Gastrocnemius medialis (tissue), 4 donors: ENCODE measurements at regions of chr3 and their contacts with region 1.

Region 1: GRCh38 chr3:49582177-49582576 is 27.9 kb downstream of the BSN start:
- DNase-seq: no peak
- ATAC-seq: no peak
- H3K4me3 ChIP-seq: no peak overlapping the region
- H3K27ac ChIP-seq: no peak overlapping the region
- H3K4me1 ChIP-seq: no peaks in the 10 kb centered on the region
- H3K27me3 ChIP-seq: no peaks in the 10 kb centered on the region
- CTCF ChIP-seq: no peak
- POLR2A ChIP-seq: no peak

Region 2: DNA sequence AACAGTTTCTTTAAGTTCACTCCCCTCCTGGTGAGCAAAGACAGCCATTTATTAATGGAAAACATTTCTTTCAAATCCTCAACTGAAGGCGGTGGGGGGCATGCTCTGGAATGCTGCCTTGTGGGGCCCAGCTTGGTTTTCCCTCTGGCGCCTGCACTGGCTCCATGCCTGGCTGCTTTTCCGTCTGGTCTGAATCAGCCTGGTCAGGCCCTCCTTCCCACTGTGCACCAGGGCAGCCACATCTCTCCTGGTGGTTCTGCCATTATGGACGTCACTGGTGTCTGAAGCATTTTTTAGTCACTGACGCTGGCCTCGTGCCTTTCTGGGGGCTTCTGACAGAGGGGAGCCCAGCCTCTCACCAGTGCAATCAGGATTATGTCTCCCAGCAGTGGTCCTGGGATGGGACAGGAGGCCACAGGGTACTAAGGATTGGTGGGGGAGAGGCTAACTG is 34.3 kb after region 1 on chr3:
- in situ Hi-C with region 1: no loop called
- intact Hi-C with region 1: loop called (anchors 5 kb)
- DNase-seq: no peak
- ATAC-seq: no peak
- H3K4me3 ChIP-seq: no peak overlapping the region
- H3K27ac ChIP-seq: no peak overlapping the region
- H3K4me1 ChIP-seq: no peaks in the 10 kb centered on the region
- H3K27me3 ChIP-seq: no peaks in the 10 kb centered on the region
- CTCF ChIP-seq: no peak
- POLR2A ChIP-seq: no peak